ENCODE measurements at regions of chr9 and their contacts with region 1.

Region 1: GRCh38 chr9:129110740-129111527 is at the starts of genes CRAT and PTPA:
- DNase-seq: peak; percentile 93 to 99 (median 96)
- ATAC-seq: peak; percentile 85
- H3K4me3 ChIP-seq: peak within 1 kb of the TSS; percentile 93
- H3K4me3 Mint-ChIP-seq: peak within 1 kb of the TSS; percentile 98
- H3K27ac ChIP-seq: peak within 1 kb of the TSS; percentile 70 to 92
- H3K27ac Mint-ChIP-seq: peak within 1 kb of the TSS; percentile 92
- H3K4me1 ChIP-seq: peaks cover 34% of the 10 kb centered on the region
- H3K4me1 Mint-ChIP-seq: peaks cover 36% of the 10 kb centered on the region
- H3K27me3 ChIP-seq: no peaks in the 10 kb centered on the region
- H3K27me3 Mint-ChIP-seq: no peaks in the 10 kb centered on the region
- CTCF ChIP-seq: no peak
- total RNA-seq, gene CRAT: 7.1 to 9.4 TPM
- total RNA-seq, gene PTPA: 21.6 to 23.3 TPM

Region 2: GRCh38 chr9:129036241-129036922 is 74.6 kb before region 1 on chr9 and contains the start of gene MIGA2:
- CTCF ChIA-PET with region 1: no interaction called
- POLR2A ChIA-PET with region 1: interaction called, 3 read pairs
- intact Hi-C with region 1: loop called (anchors 1 to 2 kb)
- DNase-seq: peak; percentile 79 to 98 (median 90)
- ATAC-seq: peak; percentile 92
- H3K4me3 ChIP-seq: peak within 1 kb of the TSS; percentile 84
- H3K4me3 Mint-ChIP-seq: peak within 1 kb of the TSS; percentile 89
- H3K27ac ChIP-seq: peak within 1 kb of the TSS; percentile 13 to 46
- H3K27ac Mint-ChIP-seq: peak within 1 kb of the TSS; percentile 52
- H3K4me1 ChIP-seq: peaks cover 34% of the 10 kb centered on the region
- H3K4me1 Mint-ChIP-seq: peaks cover 35% of the 10 kb centered on the region
- H3K27me3 ChIP-seq: no peaks in the 10 kb centered on the region
- H3K27me3 Mint-ChIP-seq: no peaks in the 10 kb centered on the region
- CTCF ChIP-seq: no peak
- total RNA-seq, gene MIGA2: 53.2 to 56.9 TPM

Measured in CD4-positive, alpha-beta T cell (primary cell).